Caco-2 (cell line): ENCODE measurements at regions of chr2 and their contacts with region 1.

Region 1: GRCh38 chr2:162073888-162074645 is at the start of gene DPP4:
- DNase-seq: peak; percentile 87 to 89
- H3K4me3 ChIP-seq: peak within 1 kb of the TSS; percentile 95
- H3K4me3 Mint-ChIP-seq: peak within 1 kb of the TSS; percentile 87
- H3K27ac Mint-ChIP-seq: peak within 1 kb of the TSS; percentile 54
- H3K4me1 ChIP-seq: peaks cover 55% of the 10 kb centered on the region
- H3K4me1 Mint-ChIP-seq: peaks cover 39% of the 10 kb centered on the region
- H3K27me3 ChIP-seq: no peaks in the 10 kb centered on the region
- H3K27me3 Mint-ChIP-seq: no peaks in the 10 kb centered on the region
- CTCF ChIP-seq: no peak
- total RNA-seq, gene DPP4: 190 and 199 TPM in 2 replicates

Region 2: GRCh38 chr2:162107361-162107901 is 33.4 kb after region 1 on chr2:
- CTCF ChIA-PET with region 1: no interaction called
- POLR2A ChIA-PET with region 1: no interaction called
- intact Hi-C with region 1: loop called (anchors 1 kb)
- DNase-seq: peak in 1 of 2 experiments; percentile 55
- H3K4me3 ChIP-seq: no peak overlapping the region
- H3K4me3 Mint-ChIP-seq: peak overlapping the region; percentile 21
- H3K27ac Mint-ChIP-seq: peak overlapping the region; percentile 73
- H3K4me1 ChIP-seq: peaks cover 60% of the 10 kb centered on the region
- H3K4me1 Mint-ChIP-seq: peaks cover 30% of the 10 kb centered on the region
- H3K27me3 ChIP-seq: no peaks in the 10 kb centered on the region
- H3K27me3 Mint-ChIP-seq: no peaks in the 10 kb centered on the region
- CTCF ChIP-seq: no peak

Region 3: DNA sequence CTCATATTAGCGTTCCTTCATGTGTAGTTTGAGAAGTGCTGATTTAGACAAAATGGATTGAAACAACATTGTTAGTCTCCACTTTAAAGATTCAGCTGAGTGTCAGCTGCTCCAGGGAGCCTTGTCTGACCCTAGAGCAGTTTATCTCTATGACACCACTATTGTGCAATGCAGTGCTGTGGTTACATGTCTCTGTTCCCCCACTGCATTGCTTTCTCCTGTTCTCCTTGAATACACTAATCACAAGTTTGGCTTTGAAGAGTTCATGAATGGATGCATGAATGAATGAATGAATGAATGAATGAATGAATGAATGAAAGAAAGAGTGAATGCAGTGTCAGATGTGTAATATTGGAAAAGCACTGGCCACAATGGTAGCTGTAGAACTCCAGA is 39.7 kb after region 1 on chr2:
- CTCF ChIA-PET with region 1: no interaction called
- POLR2A ChIA-PET with region 1: no interaction called
- intact Hi-C with region 1: loop called (anchors 1 kb)
- DNase-seq: peak; percentile 75 to 78
- H3K4me3 ChIP-seq: no peak overlapping the region
- H3K4me3 Mint-ChIP-seq: peak overlapping the region; percentile 38
- H3K27ac Mint-ChIP-seq: peak overlapping the region; percentile 82
- H3K4me1 ChIP-seq: peaks cover 66% of the 10 kb centered on the region
- H3K4me1 Mint-ChIP-seq: peaks cover 32% of the 10 kb centered on the region
- H3K27me3 ChIP-seq: no peaks in the 10 kb centered on the region
- H3K27me3 Mint-ChIP-seq: no peaks in the 10 kb centered on the region
- CTCF ChIP-seq: no peak